Caco-2 (cell line): ENCODE measurements at regions of chr2 and their contacts with region 1.

Region 1: GRCh38 chr2:151828143-151828889 is at the start of gene ARL5A:
- DNase-seq: peak; percentile 94 to 97
- H3K4me3 ChIP-seq: peak within 1 kb of the TSS; percentile 90
- H3K4me3 Mint-ChIP-seq: peak within 1 kb of the TSS; percentile 78
- H3K27ac Mint-ChIP-seq: peak within 1 kb of the TSS; percentile 79
- H3K4me1 ChIP-seq: peaks cover 12% of the 10 kb centered on the region
- H3K4me1 Mint-ChIP-seq: peaks cover 17% of the 10 kb centered on the region
- H3K27me3 ChIP-seq: no peaks in the 10 kb centered on the region
- H3K27me3 Mint-ChIP-seq: no peaks in the 10 kb centered on the region
- CTCF ChIP-seq: no peak
- total RNA-seq, gene ARL5A: 51.4 and 58.3 TPM in 2 replicates

Region 2: DNA sequence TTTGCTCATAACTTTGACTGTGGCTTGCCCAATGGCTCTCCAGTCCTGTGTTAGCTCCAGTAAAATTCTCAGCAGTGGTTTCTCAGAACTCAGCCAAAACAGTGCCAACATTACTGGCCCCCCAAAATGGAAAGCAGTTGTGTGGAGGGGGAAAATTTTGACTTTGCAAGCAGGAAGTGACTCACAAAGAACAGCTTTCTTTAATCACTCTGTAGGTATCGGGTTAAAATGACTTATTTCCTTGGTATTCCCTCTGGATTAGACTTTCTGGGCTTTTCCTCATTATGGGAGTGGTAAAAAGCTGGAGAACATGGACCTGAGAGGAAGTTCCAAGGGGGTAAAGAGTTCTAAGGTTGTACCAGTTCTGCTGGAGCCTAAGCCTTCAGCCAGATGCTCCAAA is 1165.2 kb before region 1 on chr2:
- CTCF ChIA-PET with region 1: no interaction called
- POLR2A ChIA-PET with region 1: no interaction called
- intact Hi-C with region 1: no loop called
- DNase-seq: no peak
- H3K4me3 ChIP-seq: no peak overlapping the region
- H3K4me3 Mint-ChIP-seq: no peak overlapping the region
- H3K27ac Mint-ChIP-seq: no peak overlapping the region
- H3K4me1 ChIP-seq: no peaks in the 10 kb centered on the region
- H3K4me1 Mint-ChIP-seq: no peaks in the 10 kb centered on the region
- H3K27me3 ChIP-seq: no peaks in the 10 kb centered on the region
- H3K27me3 Mint-ChIP-seq: peaks cover under 1% of the 10 kb centered on the region
- CTCF ChIP-seq: no peak

Region 3: GRCh38 chr2:151953467-151953866 is 125.2 kb after region 1 on chr2:
- CTCF ChIA-PET with region 1: no interaction called
- POLR2A ChIA-PET with region 1: interaction called, 3 read pairs
- intact Hi-C with region 1: loop called (anchors 5 kb)
- DNase-seq: no peak
- H3K4me3 ChIP-seq: no peak overlapping the region
- H3K4me3 Mint-ChIP-seq: no peak overlapping the region
- H3K27ac Mint-ChIP-seq: no peak overlapping the region
- H3K4me1 ChIP-seq: no peaks in the 10 kb centered on the region
- H3K4me1 Mint-ChIP-seq: no peaks in the 10 kb centered on the region
- H3K27me3 ChIP-seq: no peaks in the 10 kb centered on the region; the same call in 1 of the 2 replicates
- H3K27me3 Mint-ChIP-seq: peaks cover 17% of the 10 kb centered on the region
- CTCF ChIP-seq: peak in 1 of 2 experiments; percentile 28

Region 4: GRCh38 chr2:151999053-151999452 is 170.7 kb after region 1 on chr2:
- CTCF ChIA-PET with region 1: no interaction called
- POLR2A ChIA-PET with region 1: no interaction called
- intact Hi-C with region 1: loop called (anchors 1 kb)
- DNase-seq: peak; percentile 69 to 70
- H3K4me3 ChIP-seq: no peak overlapping the region
- H3K4me3 Mint-ChIP-seq: no peak overlapping the region
- H3K27ac Mint-ChIP-seq: no peak overlapping the region
- H3K4me1 ChIP-seq: peaks cover 9% of the 10 kb centered on the region; the same call in 1 of the 2 replicates
- H3K4me1 Mint-ChIP-seq: peaks cover 2% of the 10 kb centered on the region
- H3K27me3 ChIP-seq: no peaks in the 10 kb centered on the region
- H3K27me3 Mint-ChIP-seq: peaks cover under 1% of the 10 kb centered on the region
- CTCF ChIP-seq: peak; percentile 71 to 81